ENCODE measurements at regions of chr1 and their contacts with region 1.

Region 1: DNA sequence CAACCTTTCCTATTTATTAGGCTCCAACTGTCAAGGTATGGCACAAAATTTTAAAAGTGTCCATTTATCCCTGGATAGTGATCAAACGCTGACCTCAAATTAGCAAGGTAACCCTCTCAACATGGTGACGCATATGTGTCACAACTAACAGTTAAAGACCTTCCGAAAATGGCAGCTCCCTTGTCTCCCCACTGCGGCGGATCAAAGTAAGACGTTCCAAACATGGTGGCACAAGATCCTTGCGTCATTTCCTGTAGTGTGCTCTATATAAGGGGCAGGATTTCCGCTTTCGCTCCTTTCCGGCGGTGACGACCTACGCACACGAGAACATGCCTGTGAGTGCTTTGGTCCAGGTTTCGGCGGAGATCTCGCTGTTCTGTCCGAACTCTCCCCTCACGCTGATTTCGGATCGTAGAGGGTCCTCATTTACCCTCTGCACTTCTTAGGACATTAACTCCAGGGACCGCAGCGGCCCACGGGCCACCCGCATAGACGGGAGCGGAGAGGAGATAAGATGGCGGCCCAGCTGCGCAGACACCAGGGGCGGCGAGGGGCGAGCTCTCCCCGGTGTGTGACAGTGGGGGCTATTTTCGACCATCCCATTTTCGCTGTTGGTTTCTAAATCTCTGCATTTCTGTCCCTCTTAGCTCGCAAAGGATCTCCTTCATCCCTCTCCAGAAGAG is at the start of gene RPS27:
- DNase-seq: peak; percentile 73
- ATAC-seq: peak; percentile 80
- H3K4me3 Mint-ChIP-seq: peak within 1 kb of the TSS; percentile 98
- H3K27ac Mint-ChIP-seq: peak within 1 kb of the TSS; percentile 99
- H3K4me1 Mint-ChIP-seq: peaks cover 53% of the 10 kb centered on the region
- H3K27me3 Mint-ChIP-seq: no peaks in the 10 kb centered on the region
- CTCF ChIP-seq: no peak
- total RNA-seq, gene RPS27: 3,463 and 4,673 TPM in 2 replicates

Region 2: DNA sequence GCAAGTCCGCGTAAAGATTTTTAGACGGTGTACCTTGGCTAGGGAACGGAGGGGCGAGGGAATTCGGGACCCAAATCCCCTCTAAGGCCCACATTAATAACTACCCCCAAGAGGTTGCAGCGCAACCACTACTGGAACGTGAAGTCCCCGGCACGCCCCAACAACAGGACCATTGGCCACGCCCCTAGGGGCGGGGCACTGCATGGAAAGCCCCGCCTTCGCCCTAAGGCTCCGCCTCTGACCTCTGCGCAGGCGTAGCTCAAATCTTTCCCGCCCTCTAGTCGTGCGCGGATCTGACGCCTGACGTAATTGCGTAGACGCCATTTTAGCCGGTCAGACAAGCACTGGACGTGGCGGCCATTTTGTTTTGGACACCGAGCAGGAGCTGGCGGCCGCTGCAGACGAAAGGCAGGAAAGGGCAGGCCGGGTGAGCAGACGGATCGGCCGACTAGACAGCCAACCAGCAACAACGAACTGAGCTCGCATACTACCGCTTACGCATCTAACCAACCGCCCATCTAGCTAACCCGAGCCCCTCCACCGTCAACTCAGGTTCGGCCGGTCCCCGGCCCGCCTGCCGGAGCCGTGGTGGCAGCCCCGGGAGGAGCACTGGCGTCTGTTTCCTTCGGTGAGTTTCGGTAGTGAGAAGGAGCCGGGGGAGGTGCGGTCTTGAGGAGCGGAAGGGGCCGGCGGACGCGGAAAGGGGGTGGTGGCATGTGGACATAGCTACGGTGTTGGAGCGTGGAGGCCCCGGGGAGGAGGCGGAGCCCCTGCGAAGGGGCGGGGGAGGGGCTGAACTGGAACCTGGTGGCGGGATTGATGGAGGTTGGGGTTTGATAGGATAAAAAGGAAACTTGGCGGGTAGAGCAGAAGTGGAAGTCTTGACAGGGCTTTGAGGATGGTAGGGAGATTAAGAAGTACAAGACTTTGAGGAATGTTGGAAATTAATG is 356.6 kb before region 1 on chr1 and contains the start of gene CHTOP:
- CTCF ChIA-PET with region 1: no interaction called
- POLR2A ChIA-PET with region 1: interaction called, 22 read pairs
- intact Hi-C with region 1: no loop called
- DNase-seq: peak; percentile 98
- ATAC-seq: peak; percentile 86
- H3K4me3 Mint-ChIP-seq: peak within 1 kb of the TSS; percentile 99
- H3K27ac Mint-ChIP-seq: peak within 1 kb of the TSS; percentile 100
- H3K4me1 Mint-ChIP-seq: peaks cover 44% of the 10 kb centered on the region
- H3K27me3 Mint-ChIP-seq: no peaks in the 10 kb centered on the region
- CTCF ChIP-seq: no peak
- total RNA-seq, gene CHTOP: 140 and 148 TPM in 2 replicates

Region 3: DNA sequence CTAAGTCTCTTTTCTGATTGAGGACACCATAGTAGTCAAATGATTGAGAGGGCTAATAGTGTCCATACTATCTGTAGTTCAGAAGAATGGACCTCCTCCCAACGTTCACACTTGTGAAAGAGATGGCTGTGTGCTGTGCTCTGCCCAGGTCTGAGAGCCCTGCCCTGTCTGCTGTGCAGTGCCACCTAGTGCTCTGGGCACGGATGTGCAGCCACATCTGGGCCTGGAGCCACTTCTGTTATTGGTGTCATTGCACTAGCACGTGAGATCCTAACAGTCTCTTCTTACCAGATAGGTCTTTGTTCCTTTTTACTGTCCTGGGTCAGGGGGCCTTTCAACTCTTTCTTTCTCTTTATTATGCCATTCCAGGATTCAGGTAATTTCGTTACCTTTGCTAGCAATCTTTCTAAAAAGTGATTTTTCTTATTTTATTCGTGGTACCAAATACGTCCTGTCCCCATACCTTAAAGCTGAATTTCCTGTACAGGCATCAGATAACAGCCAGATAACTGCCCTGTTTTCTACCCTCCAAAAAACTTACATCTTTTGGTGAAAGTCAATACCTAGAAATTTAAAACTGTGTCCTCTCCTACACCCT is 241.1 kb before region 1 on chr1:
- CTCF ChIA-PET with region 1: interaction called, 4 read pairs
- POLR2A ChIA-PET with region 1: no interaction called
- intact Hi-C with region 1: loop called (anchors 1 kb)
- DNase-seq: peak; percentile 60
- ATAC-seq: peak; percentile 100
- H3K4me3 Mint-ChIP-seq: no peak overlapping the region
- H3K27ac Mint-ChIP-seq: peak overlapping the region; percentile 3
- H3K4me1 Mint-ChIP-seq: peaks cover 14% of the 10 kb centered on the region
- H3K27me3 Mint-ChIP-seq: no peaks in the 10 kb centered on the region
- CTCF ChIP-seq: no peak

Region 4: GRCh38 chr1:153805042-153805745 is 185.4 kb before region 1 on chr1:
- CTCF ChIA-PET with region 1: interaction called, 6 read pairs
- POLR2A ChIA-PET with region 1: interaction called, 20 read pairs
- intact Hi-C with region 1: no loop called
- DNase-seq: no peak
- ATAC-seq: peak; percentile 98
- H3K4me3 Mint-ChIP-seq: peak overlapping the region; percentile 42
- H3K27ac Mint-ChIP-seq: peak overlapping the region; percentile 83
- H3K4me1 Mint-ChIP-seq: peaks cover 34% of the 10 kb centered on the region
- H3K27me3 Mint-ChIP-seq: no peaks in the 10 kb centered on the region
- CTCF ChIP-seq: no peak

Region 5: GRCh38 chr1:153946622-153947241 is 43.9 kb before region 1 on chr1 and contains the start of gene DENND4B:
- CTCF ChIA-PET with region 1: interaction called, 46 read pairs
- POLR2A ChIA-PET with region 1: interaction called, 116 read pairs
- intact Hi-C with region 1: loop called (anchors 1 kb)
- DNase-seq: peak; percentile 74
- ATAC-seq: peak; percentile 54
- H3K4me3 Mint-ChIP-seq: peak within 1 kb of the TSS; percentile 90
- H3K27ac Mint-ChIP-seq: peak within 1 kb of the TSS; percentile 96
- H3K4me1 Mint-ChIP-seq: peaks cover 71% of the 10 kb centered on the region
- H3K27me3 Mint-ChIP-seq: no peaks in the 10 kb centered on the region
- CTCF ChIP-seq: no peak
- total RNA-seq, gene DENND4B: 217 and 257 TPM in 2 replicates

Region 6: DNA sequence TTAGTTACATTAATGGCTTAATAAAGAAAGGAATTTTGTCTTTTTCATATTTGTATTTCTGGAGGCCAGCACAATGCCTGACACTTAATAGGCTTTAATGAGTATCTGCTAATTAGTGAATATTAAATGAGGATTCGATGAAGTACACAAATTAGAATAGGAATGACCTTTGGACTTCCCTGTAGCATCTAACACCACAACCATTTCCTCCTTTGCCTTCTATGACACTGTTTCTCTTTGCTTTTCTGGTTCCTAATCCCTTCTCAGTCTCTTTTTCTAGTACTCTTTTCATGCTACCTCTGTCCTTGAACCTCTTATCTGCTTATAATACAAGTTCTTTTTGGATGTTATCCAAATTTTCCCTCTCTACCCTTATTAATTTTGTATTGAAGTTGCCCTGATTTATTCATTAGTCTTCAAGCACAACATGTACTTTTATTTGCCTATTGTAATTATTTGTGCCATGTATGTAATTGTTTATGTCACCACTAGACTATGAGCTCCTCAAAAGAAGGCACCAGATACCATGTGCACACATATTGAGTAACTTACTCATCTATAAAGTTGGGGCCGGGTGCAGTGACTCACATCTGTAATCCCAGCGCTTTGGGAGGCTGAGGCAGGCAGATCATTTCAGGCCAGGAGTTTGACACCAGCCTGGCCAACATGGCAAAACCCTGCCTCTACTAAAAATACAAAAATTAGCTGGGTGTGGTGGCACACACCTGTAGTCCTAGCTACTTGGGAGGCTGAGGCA is 23.7 kb after region 1 on chr1:
- CTCF ChIA-PET with region 1: no interaction called
- POLR2A ChIA-PET with region 1: no interaction called
- intact Hi-C with region 1: no loop called
- DNase-seq: no peak
- ATAC-seq: no peak
- H3K4me3 Mint-ChIP-seq: no peak overlapping the region
- H3K27ac Mint-ChIP-seq: no peak overlapping the region
- H3K4me1 Mint-ChIP-seq: no peaks in the 10 kb centered on the region
- H3K27me3 Mint-ChIP-seq: no peaks in the 10 kb centered on the region
- CTCF ChIP-seq: no peak

Region 7: DNA sequence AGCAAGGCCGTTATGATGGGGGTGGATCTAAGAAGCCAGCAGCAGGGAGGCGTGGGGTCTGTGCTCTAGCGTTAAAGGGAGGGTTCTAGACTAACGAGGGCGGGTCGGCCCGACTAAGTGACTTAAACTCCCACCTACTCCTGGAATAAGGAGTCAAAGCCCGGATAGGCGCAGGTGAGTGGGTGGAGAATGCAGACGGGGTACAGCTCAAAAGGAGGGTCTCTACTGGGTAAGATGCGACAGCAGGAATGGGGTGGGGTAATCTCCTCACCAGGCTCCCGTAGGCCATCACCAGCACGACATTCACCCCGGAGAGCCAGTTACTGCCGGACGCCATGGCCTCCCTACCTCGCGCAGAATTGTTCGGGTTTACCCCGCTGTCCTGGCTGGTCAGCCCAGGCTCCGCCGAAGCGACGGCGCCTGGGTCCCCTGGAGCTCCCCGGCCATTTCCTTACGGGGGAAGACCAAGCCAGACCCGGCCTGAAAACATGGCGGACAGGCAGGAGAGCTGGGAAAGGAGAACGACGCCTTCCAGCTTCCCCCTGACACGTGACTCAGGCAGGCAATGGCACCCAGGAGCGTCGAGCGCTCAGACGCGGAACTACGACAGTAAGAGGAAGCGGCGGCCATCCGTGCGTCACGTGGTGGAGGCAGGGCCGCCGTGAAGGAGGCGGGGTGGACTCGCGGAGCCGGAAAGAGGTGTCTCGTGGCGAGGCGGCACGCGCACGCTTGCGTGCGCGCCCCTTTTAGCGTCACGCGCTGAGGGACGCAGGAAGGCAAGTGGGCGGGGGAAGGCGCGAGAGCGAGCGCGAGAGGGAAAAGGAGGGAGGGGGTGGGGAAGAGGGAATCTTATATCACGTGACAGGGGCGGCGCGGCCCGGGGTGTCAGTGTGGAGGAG is 229.7 kb after region 1 on chr1 and contains the start of gene UBAP2L:
- CTCF ChIA-PET with region 1: no interaction called
- POLR2A ChIA-PET with region 1: interaction called, 27 read pairs
- intact Hi-C with region 1: no loop called
- DNase-seq: peak; percentile 98
- ATAC-seq: peak; percentile 84
- H3K4me3 Mint-ChIP-seq: peak within 1 kb of the TSS; percentile 99
- H3K27ac Mint-ChIP-seq: peak within 1 kb of the TSS; percentile 100
- H3K4me1 Mint-ChIP-seq: peaks cover 75% of the 10 kb centered on the region
- H3K27me3 Mint-ChIP-seq: no peaks in the 10 kb centered on the region
- CTCF ChIP-seq: no peak
- total RNA-seq, gene UBAP2L: 209 and 234 TPM in 2 replicates

Measured in activated B cell treated with CpG ODN at 0.5 μM for 24 hours (primary cell).